CD4-positive, alpha-beta memory T cell (primary cell): ENCODE measurements at regions of chr6 and their contacts with region 1.

Region 1: DNA sequence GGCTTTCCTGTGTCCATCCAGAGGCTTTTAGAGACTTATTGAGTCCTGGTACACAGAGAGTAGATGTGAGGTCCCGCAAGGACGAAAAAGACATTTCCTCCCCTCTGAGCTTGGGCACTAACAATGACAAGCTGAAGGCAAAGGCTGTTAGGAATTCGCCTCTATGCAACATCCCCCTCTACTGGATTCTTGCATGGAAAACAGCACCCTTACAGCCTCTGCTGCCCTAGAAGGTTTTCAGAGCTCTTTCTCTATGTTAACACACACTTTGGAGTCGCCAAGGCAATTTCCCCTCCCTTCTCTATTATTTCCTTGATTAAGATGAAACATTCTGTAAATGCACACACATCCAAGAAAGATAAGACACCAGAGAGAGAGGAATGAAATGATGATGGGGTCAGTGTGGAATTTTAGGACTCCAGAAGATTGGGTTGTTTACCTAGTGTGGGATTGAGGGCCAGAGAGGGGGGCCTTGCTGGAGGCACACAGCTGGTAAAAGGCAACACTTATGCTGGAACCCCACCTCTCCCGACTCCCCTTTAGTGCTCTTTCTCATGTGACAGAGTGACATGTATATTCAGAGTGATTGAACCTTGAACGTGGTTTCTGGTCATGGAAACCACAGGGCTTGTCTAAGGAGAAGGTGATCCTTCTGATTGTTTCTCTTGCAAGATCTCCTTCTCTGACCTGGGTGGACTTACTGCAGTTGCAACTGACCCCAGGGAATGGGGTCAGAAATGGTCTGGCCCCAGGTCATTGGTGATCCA is 300.7 kb downstream of the CLIC5 start:
- DNase-seq: peak; percentile 62 to 74 (median 68)
- H3K4me3 ChIP-seq: no peak overlapping the region
- H3K4me3 Mint-ChIP-seq: peak overlapping the region; percentile 62 to 78 (median 66)
- H3K27ac ChIP-seq: no peak overlapping the region
- H3K27ac Mint-ChIP-seq: peak overlapping the region in 3 of 7 donors; percentile 3 to 70 (median 58)
- H3K4me1 ChIP-seq: peaks cover 21% of the 10 kb centered on the region
- H3K4me1 Mint-ChIP-seq: peaks cover 19 to 29% (median 23%) of the 10 kb centered on the region in 4 donors
- H3K27me3 ChIP-seq: no peaks in the 10 kb centered on the region
- H3K27me3 Mint-ChIP-seq: peaks cover 0 to 2% of the 10 kb centered on the region in 2 donors

Region 2: GRCh38 chr6:44630125-44631028 is 1084.5 kb before region 1 on chr6:
- CTCF ChIA-PET with region 1: interaction called, 15 read pairs
- POLR2A ChIA-PET with region 1: no interaction called
- intact Hi-C with region 1: no loop called
- DNase-seq: peak in 4 of 5 donors; percentile 7 to 24 (median 19)
- H3K4me3 ChIP-seq: no peak overlapping the region
- H3K4me3 Mint-ChIP-seq: no peak overlapping the region
- H3K27ac ChIP-seq: no peak overlapping the region
- H3K27ac Mint-ChIP-seq: no peak overlapping the region
- H3K4me1 ChIP-seq: no peaks in the 10 kb centered on the region
- H3K4me1 Mint-ChIP-seq: peaks cover 0 to 9% (median 5%) of the 10 kb centered on the region in 4 donors
- H3K27me3 ChIP-seq: no peaks in the 10 kb centered on the region
- H3K27me3 Mint-ChIP-seq: peaks cover 2 to 3% of the 10 kb centered on the region in 2 donors

Region 3: GRCh38 chr6:44976719-44977641 is 737.9 kb before region 1 on chr6:
- CTCF ChIA-PET with region 1: interaction called, 3 read pairs
- POLR2A ChIA-PET with region 1: interaction called, 3 read pairs
- intact Hi-C with region 1: loop called (anchors 10 kb)
- DNase-seq: peak; percentile 64 to 81 (median 74)
- H3K4me3 ChIP-seq: no peak overlapping the region
- H3K4me3 Mint-ChIP-seq: peak overlapping the region; percentile 47 to 78 (median 68)
- H3K27ac ChIP-seq: no peak overlapping the region
- H3K27ac Mint-ChIP-seq: peak overlapping the region; percentile 54 to 92 (median 81)
- H3K4me1 ChIP-seq: peaks cover 45% of the 10 kb centered on the region
- H3K4me1 Mint-ChIP-seq: peaks cover 24 to 61% (median 40%) of the 10 kb centered on the region in 4 donors
- H3K27me3 ChIP-seq: no peaks in the 10 kb centered on the region
- H3K27me3 Mint-ChIP-seq: no peaks in the 10 kb centered on the region

Region 4: DNA sequence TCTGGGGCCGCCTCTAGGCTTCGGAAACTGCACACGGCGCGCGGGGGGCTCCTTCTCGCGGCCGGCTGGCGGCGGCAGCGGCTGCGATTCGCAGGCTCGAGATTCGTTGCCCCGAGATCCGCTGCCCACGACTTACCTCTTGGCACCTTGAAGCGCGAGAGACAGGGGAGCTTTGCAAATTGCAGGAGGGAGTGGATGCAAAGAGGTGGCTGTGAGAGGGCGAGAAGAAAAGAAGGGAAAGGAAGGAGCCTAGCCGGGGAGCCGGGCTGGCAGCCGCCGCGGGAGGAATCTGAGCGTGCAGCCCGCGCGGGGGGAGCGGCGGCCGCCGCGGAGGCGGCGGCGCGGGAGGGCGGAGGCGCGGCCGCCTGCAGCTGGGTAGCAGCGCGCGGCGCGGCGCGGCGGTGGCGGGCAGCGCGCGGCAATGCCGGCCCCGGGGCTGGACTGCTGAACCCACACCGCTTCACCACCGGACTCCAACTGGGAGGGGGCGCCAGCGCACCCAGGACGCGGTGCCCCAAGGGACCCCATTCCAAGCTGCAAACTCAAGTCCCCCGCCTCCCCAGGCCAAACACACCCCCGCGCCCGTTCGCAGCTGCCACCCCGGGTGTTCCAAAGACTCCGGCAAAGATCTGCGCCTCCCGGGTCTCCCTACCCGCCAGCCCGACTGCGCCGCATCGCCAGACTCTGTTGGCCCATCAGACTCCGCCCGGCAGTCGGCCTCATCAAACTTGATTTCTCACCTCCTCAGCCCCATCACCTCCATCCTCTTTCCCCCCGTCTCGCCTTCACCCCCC is 293.0 kb before region 1 on chr6:
- CTCF ChIA-PET with region 1: interaction called, 50 read pairs
- POLR2A ChIA-PET with region 1: interaction called, 31 read pairs
- intact Hi-C with region 1: loop called (anchors 1 kb)
- DNase-seq: peak; percentile 51 to 65 (median 61)
- H3K4me3 ChIP-seq: peak overlapping the region; percentile 66 to 86
- H3K4me3 Mint-ChIP-seq: peak overlapping the region; percentile 96 to 99 (median 98)
- H3K27ac ChIP-seq: peak overlapping the region; percentile 72
- H3K27ac Mint-ChIP-seq: peak overlapping the region; percentile 92 to 98 (median 96)
- H3K4me1 ChIP-seq: peaks cover 35% of the 10 kb centered on the region
- H3K4me1 Mint-ChIP-seq: peaks cover 26 to 58% (median 38%) of the 10 kb centered on the region in 4 donors
- H3K27me3 ChIP-seq: no peaks in the 10 kb centered on the region
- H3K27me3 Mint-ChIP-seq: peaks cover 3 to 5% of the 10 kb centered on the region in 2 donors

Region 5: DNA sequence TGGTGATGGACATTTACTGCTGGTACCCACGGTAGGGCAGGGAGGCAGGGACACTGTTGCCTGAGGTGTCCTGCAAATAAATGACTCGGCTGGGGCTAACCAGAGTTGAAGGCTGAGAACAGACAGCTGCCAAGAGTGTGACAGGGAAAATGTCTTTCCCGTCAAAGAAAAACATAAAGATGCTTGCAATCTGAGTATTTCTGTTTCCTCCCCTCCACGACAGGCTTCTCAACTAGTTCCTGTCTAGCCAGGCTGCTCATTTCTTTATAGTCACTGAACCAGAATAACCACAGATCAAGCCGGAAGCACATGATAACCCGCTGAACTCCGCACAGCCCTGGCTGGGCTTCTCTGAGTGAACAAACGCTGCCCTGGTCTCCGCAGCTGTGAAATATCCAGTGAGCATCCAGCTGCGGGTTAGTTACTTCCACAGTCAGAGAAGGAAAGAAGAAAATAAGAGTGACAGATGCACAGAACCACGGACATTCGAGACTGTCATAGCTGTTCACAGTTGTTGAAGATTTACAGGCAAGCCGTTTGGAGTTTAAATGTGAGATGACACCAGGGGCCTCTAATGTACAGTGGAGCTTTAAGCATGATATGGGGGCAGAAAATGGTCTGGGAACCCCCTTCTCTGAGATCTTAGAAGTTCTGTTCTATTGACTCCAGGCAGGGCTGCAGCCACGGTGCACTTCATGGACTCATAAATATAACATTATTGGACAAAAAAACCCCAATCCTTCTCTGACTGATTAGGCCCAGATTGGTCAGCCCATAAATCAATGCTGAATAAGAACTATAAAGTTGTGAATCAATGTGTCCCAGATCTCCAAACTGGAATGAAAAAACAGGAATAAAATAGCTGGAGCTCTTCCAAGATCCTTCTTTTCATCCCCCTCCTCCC is 37.3 kb before region 1 on chr6:
- CTCF ChIA-PET with region 1: interaction called, 13 read pairs
- POLR2A ChIA-PET with region 1: interaction called, 4 read pairs
- intact Hi-C with region 1: no loop called
- DNase-seq: peak; percentile 52 to 68 (median 58)
- H3K4me3 ChIP-seq: peak overlapping the region in 1 of 2 donors; percentile 27
- H3K4me3 Mint-ChIP-seq: peak overlapping the region; percentile 72 to 86 (median 79)
- H3K27ac ChIP-seq: peak overlapping the region; percentile 3
- H3K27ac Mint-ChIP-seq: peak overlapping the region; percentile 9 to 81 (median 73)
- H3K4me1 ChIP-seq: peaks cover 34% of the 10 kb centered on the region
- H3K4me1 Mint-ChIP-seq: peaks cover 25 to 53% (median 32%) of the 10 kb centered on the region in 4 donors
- H3K27me3 ChIP-seq: no peaks in the 10 kb centered on the region
- H3K27me3 Mint-ChIP-seq: no peaks in the 10 kb centered on the region